Panc1 (cell line): ENCODE measurements at regions of chr1 and their contacts with region 1.

Region 1: DNA sequence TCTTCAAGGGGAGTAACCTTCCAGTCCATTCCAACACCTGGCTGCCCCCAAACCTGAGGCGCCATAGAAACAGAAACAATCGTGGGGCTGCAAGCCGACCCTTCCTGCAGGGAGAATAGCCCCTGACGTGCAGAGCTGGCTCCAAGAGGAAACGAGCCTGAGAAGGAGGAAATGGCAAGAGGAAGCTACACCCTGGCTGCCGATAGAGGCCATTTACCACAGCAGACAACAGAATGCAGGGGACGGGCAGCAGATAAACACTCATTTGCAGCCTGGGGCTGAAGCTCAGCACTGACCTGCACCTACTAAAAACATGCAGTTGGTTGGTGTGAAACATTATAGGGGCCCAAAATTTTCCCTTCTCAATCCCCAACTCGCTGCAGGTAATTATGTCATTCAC is 8.7 kb upstream of the TDRD10 start:
- DNase-seq: no peak
- ATAC-seq: no peak
- H3K4me3 ChIP-seq: no peak overlapping the region
- H3K27ac ChIP-seq: no peak overlapping the region
- H3K4me1 ChIP-seq: no peaks in the 10 kb centered on the region
- H3K27me3 ChIP-seq: peaks cover 23% of the 10 kb centered on the region; the same call in 1 of the 2 replicates
- CTCF ChIP-seq: no peak

Region 2: DNA sequence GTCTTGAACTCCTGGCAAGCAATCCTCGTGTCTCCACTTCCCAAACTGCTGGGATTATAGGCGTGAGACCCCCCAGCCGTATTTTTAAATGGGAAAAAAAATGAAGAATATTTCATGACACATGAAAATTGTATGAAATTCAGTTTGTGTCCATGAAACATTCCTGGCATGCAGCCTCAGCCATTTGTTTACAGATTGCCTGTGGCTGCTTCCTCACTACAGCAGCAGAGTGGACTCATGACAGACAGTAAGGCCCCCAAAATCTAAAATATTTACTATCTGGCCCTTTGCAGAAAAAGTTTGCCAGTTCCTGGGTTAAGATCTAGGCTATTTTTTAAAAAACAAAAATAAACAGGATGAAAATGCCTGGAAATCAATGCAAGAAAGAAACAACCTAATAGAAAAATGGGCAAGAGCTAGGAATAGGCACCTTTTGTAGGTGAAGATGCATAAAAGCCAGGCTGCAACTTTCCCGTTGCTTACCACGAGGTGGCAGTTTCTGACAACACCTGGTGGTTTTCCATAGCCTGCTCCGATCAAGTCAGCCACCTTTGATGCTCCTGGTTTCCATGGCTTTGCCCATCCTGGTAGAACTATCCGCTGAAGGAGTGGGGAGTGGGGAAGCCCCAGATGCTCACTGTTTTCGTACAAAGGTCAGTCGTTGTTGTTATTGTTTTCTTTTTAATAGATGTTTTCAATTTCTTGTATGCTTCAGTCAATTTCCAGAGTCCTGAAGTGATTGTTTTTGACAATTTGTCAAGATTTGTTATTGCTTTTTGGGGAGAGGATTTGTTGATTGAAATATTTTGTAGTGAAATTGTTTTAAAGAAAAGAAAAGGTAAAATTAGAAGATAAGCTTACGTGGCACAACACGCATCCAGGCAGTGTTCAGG is 40.9 kb after region 1 on chr1:
- CTCF ChIA-PET with region 1: no interaction called
- POLR2A ChIA-PET with region 1: no interaction called
- in situ Hi-C with region 1: no loop called
- intact Hi-C with region 1: loop called (anchors 5 kb)
- DNase-seq: no peak
- ATAC-seq: peak; percentile 87
- H3K4me3 ChIP-seq: no peak overlapping the region
- H3K27ac ChIP-seq: no peak overlapping the region
- H3K4me1 ChIP-seq: no peaks in the 10 kb centered on the region
- H3K27me3 ChIP-seq: peaks cover 2% of the 10 kb centered on the region; the same call in 1 of the 2 replicates
- CTCF ChIP-seq: peak; percentile 86